Activated CD4-positive, alpha-beta memory T cell treated with anti-CD3 and anti-CD28 coated beads for 36 hours (primary cell): ENCODE measurements at regions of chr11 and their contacts with region 1.

Region 1: GRCh38 chr11:65540297-65541092 is 15.6 kb downstream of the SCYL1 start:
- DNase-seq: peak; percentile 94
- H3K4me3 Mint-ChIP-seq: peak overlapping the region; percentile 79
- H3K27ac Mint-ChIP-seq: peak overlapping the region; percentile 87
- H3K4me1 Mint-ChIP-seq: peaks cover 20% of the 10 kb centered on the region
- H3K27me3 Mint-ChIP-seq: no peaks in the 10 kb centered on the region

Region 2: GRCh38 chr11:65524741-65525545 is 15.6 kb before region 1 on chr11 and contains the start of gene SCYL1:
- CTCF ChIA-PET with region 1: interaction called, 34 read pairs
- POLR2A ChIA-PET with region 1: interaction called, 7 read pairs
- intact Hi-C with region 1: no loop called
- DNase-seq: peak; percentile 90
- H3K4me3 Mint-ChIP-seq: peak within 1 kb of the TSS; percentile 84
- H3K27ac Mint-ChIP-seq: peak within 1 kb of the TSS; percentile 84
- H3K4me1 Mint-ChIP-seq: peaks cover 57% of the 10 kb centered on the region
- H3K27me3 Mint-ChIP-seq: no peaks in the 10 kb centered on the region
- total RNA-seq, gene SCYL1: 67.8 to 69.8 TPM

Region 3: DNA sequence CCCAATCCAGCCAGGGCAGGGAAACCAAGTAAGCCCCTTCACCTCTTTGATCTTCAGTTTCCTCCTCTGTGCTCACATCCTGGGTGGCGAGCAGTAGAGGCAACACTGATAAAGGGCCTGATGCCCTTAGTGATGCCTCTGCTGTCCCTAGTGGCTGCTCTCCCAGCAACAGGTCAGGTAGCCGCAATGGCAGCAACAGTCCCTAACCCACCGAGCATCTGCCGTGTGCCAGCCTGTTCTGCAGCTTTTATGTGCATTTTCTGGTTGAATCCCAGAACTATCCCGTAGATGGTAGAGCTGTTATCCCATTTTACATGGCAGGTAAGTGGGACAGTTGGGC is 10.4 kb before region 1 on chr11:
- CTCF ChIA-PET with region 1: interaction called, 34 read pairs
- POLR2A ChIA-PET with region 1: interaction called, 7 read pairs
- intact Hi-C with region 1: no loop called
- DNase-seq: peak; percentile 40
- H3K4me3 Mint-ChIP-seq: no peak overlapping the region
- H3K27ac Mint-ChIP-seq: no peak overlapping the region
- H3K4me1 Mint-ChIP-seq: peaks cover 26% of the 10 kb centered on the region
- H3K27me3 Mint-ChIP-seq: no peaks in the 10 kb centered on the region

Region 4: DNA sequence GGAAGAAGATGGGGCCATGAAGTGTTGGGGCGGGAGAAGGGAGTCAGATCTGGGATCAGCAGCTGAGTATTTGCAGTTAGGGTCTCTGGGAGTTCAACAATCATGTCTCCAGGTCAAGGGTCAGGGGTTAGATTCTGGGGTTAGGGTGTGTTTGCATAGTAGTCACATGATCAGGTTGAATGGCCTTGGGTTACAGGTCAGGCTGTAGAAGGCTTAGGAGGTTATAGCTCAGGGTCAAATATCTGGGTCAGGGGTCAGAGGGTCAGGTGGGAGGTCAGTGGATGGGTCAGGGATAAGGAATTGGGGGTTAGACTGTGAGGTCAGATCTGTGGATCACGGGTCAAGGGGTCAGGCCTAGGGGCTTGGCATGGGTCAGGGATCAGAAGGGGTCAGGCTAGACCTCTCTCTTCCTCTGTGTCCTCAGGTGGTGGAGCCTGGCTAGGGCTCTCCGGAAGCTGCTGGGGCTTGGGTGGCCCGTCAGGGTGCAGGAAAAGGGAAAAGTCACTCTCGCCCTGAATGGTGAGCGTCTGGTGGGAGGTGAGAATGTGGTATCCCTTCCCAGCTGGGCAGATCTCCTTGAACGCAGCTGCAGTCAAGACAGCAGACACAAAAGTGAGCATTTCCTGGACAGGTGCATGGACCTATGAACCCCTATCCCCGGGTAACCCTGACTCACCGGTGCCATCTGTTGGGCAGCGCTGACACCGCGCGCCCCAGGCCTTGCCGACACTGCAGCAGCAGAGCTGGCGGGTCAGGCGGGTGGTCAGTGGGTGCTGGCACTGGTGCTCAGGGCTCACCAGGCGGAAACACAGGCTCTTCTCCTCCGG is 11.3 kb after region 1 on chr11:
- CTCF ChIA-PET with region 1: interaction called, 31 read pairs
- POLR2A ChIA-PET with region 1: interaction called, 4 read pairs
- intact Hi-C with region 1: loop called (anchors 2 kb)
- DNase-seq: peak; percentile 77
- H3K4me3 Mint-ChIP-seq: peak overlapping the region; percentile 1
- H3K27ac Mint-ChIP-seq: peak overlapping the region; percentile 23
- H3K4me1 Mint-ChIP-seq: peaks cover 69% of the 10 kb centered on the region
- H3K27me3 Mint-ChIP-seq: no peaks in the 10 kb centered on the region

Region 5: DNA sequence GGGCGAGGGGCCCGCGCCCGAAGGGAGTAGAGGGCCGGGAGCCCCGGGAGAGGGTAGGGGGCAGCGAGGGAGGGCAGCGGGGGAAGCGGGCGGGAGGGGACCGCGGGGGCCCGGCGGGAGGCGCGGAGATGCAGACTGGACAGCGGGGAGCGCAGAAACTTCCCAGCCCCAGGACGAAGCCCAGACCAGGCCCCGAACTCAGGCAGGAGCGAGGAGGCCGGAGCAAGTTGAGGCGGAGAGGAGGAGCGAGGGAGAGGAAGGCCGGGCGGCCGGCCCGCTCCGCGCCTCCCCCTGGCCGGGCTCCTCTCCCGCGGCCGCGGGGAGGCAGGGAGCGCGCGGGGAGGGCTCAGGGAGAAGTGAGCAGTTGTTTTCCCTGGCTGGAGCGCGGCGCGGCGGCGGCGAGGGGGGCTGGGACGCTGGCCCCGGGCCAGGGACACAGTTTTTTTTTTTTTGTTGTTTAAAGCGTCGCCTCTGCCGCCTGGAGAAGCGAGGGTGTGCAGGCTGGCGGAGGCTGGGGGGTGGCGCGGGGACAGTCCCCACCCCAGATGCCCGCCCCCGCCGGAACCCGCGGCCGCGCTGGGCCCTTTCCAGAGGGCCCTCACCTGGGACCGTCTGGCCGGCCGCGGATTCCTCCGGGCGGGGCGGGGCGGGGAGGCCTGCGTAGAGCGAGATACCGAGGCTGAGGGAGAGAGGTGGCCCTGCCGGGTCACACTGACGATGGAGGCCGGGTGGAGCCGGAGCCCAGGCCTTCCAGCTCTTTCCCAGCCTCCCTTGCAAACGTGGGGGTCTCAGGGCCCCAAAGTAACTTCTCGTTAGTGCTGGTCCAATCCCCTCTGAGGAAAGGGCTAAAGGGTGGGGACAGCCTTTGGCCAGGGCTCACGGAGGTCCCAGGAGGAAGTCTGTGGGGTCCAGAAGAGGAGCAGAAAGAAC is 17.8 kb after region 1 on chr11 and contains the start of gene LTBP3:
- CTCF ChIA-PET with region 1: interaction called, 50 read pairs
- POLR2A ChIA-PET with region 1: interaction called, 3 read pairs
- intact Hi-C with region 1: loop called (anchors 2 kb)
- DNase-seq: peak; percentile 62
- H3K4me3 Mint-ChIP-seq: peak within 1 kb of the TSS; percentile 84
- H3K27ac Mint-ChIP-seq: peak within 1 kb of the TSS; percentile 84
- H3K4me1 Mint-ChIP-seq: peaks cover 57% of the 10 kb centered on the region
- H3K27me3 Mint-ChIP-seq: no peaks in the 10 kb centered on the region
- total RNA-seq, gene LTBP3: 60.7 to 63.3 TPM

Region 6: DNA sequence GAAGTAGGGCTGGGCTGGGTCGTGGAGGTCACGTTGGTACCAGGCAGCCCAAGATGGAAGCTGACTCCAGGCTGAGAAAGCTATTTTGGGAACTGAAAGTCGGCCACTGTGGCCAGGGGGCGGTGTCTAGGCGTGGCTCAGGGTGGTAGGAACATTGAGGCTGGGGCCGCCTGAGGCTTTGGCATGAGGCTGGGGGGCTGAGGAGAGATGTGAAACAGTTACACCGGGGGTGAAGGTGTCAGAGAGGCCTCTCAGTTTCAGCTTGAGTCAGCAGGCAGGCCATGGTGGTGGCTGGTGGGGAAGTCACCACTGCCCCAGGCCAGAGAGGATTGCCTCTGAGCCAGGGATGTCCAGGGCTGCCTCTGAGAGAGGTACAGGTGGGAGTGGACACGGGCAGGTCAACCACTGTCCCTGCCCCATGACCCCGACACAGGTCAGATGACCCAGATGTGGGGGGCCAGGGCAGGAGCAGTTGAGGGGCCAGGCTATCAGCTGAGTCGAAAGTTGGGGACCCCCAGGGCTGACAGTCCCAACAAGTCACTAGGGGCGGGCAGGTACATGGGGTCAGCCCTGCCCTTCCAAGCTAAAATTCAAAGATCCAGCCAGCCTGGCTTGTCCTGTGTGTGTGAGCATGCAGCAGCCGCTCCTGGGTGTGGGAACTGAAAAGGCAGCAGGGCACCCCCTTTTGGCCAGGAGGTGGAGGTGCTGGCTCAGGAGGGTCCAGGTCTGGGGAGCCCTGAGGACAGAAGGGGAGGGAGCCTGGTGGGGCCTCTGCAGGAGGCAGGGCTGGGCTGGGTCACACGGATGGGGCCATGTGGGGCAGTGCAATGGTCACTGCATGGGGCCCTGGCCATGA is 47.9 kb after region 1 on chr11:
- CTCF ChIA-PET with region 1: interaction called, 66 read pairs
- POLR2A ChIA-PET with region 1: interaction called, 5 read pairs
- intact Hi-C with region 1: loop called (anchors 1 kb)
- DNase-seq: peak; percentile 90
- H3K4me3 Mint-ChIP-seq: peak overlapping the region; percentile 57
- H3K27ac Mint-ChIP-seq: peak overlapping the region; percentile 95
- H3K4me1 Mint-ChIP-seq: peaks cover 30% of the 10 kb centered on the region
- H3K27me3 Mint-ChIP-seq: no peaks in the 10 kb centered on the region

Region 7: DNA sequence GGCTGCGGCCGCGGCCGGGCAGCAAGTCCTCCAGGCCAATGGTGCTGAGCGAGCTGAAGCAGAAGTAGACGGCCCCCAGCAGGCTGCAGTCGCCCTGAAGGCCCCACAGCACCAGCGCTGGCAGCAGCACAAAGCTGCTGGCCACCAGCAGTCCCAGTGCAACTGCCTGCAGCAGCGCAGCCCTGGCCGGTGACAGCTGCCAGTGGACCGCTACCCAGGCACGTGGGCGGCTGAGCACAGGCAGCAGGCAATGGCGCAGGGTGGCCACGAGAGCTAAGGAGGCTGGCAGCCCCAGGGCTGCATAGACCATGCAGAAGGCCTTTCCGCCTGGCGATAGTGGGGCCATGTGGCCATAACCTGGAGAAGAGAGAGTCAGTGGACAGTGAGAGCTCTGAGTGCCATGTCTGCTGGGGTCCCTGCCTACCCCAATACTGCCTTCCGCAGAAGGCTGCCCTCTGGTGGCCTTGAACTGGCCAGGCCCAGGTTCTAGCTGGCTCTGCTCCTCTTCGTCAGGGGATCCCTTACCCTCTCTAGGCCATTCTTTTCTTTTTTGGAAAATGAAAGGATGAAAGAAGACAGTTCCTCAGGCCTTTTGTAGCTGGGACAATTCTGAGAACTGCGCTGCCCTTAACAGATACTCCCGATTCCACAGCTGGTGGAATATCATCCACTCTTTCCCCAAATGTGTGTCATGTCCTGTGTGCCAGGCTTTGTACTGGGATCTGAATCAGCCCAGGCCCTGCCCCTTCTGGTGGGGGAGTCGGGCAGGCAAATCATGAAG is 53.2 kb after region 1 on chr11:
- CTCF ChIA-PET with region 1: interaction called, 66 read pairs
- POLR2A ChIA-PET with region 1: interaction called, 5 read pairs
- intact Hi-C with region 1: loop called (anchors 1 kb)
- DNase-seq: peak; percentile 50
- H3K4me3 Mint-ChIP-seq: no peak overlapping the region
- H3K27ac Mint-ChIP-seq: peak overlapping the region; percentile 42
- H3K4me1 Mint-ChIP-seq: peaks cover 13% of the 10 kb centered on the region
- H3K27me3 Mint-ChIP-seq: no peaks in the 10 kb centered on the region